Tibial artery (tissue), 4 donors: ENCODE measurements at regions of chr9 and their contacts with region 1.

Region 1: DNA sequence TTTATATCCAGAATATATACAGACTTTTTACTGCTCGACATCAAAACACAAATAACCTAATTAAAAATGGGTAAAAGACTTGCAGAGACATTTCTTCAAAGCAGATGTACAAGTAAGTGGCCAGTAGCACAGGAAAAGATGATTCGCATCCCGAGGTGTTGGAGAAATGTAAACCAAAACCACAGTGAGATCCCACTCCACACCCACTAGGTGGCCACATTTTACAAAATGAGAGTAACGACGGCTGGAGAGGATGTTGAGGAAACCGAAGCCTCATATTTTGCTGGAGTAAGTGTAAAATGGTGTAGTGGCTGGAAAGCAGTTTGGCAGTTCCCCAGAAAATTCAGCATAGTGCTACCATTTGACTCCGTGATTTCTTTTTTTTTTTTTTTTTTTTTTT is 21.2 kb upstream of the GBGT1 start:
- DNase-seq: no peak
- H3K4me3 ChIP-seq: no peak overlapping the region
- H3K27ac ChIP-seq: no peak overlapping the region
- H3K4me1 ChIP-seq: peaks cover 0 to 3% (median 0%) of the 10 kb centered on the region in 4 donors
- H3K27me3 ChIP-seq: peaks cover 0 to 23% of the 10 kb centered on the region in 2 donors
- CTCF ChIP-seq: peak; percentile 45 to 53

Region 2: DNA sequence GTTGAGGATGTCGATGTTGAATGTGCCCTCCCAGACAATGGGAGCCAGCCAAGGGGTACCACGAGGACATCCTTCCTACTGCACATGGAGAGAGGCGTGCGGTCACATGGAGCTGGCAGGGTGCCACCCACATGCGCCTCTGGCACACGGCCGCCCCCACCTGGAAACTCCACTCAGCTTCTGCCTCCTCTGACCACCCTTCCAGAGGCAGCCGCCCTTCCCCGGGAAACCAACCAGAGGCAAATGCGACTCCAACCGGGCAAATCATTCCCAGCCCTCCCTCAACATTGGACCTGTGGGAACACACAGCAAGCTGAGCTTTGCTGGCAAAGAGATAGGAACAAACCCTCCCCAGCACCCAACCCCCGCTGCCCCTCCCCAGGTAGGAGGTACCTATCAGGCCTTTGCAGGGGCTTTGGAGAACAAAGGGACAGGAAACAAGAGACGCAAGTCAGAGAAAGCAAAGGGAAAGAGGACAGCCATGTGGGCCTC is 72.5 kb after region 1 on chr9:
- intact Hi-C with region 1: no loop called
- DNase-seq: no peak
- H3K4me3 ChIP-seq: no peak overlapping the region
- H3K27ac ChIP-seq: no peak overlapping the region
- H3K4me1 ChIP-seq: no peaks in the 10 kb centered on the region
- H3K27me3 ChIP-seq: peaks cover 0 to 12% of the 10 kb centered on the region in 2 donors
- CTCF ChIP-seq: no peak

Region 3: DNA sequence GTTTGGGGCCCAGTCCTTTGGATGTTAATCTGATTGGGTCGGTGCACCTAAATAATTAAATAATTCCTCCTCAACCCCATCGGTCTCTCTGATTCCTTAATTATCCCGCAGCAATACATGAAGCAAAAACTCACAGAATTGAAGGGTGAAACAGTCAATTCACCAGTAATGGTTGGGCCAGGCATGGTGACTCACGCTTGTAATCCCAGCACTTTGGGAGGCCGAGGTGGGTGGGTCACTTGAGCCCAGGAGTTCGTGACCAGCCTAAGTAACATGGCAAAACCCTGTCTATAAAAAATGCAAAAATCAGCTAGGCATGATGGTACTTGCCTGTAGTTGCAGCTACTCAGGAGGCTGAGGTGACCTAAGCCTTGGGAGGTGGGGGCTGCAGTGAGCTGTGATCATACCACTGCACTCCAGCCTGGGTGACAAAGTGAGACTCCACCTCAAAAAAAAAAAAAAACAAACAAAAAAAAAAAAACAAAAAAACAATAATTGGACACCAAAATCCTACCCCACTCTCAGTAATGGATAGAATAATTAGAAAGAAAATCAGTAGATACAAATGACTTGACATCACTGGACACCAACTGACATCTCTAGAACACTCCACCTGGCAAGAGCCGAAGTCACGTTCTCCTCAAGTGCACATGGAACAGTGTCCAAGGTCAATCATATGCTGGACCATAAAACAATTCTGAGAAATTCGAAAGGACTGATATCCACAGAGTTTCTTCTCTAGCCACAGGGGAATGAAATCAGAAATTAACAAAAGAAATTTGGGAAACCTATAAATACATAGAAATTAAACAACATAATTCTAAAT is 84.8 kb after region 1 on chr9:
- intact Hi-C with region 1: no loop called
- DNase-seq: no peak
- H3K4me3 ChIP-seq: no peak overlapping the region
- H3K27ac ChIP-seq: no peak overlapping the region
- H3K4me1 ChIP-seq: peaks cover 0 to 1% (median 0%) of the 10 kb centered on the region in 4 donors
- H3K27me3 ChIP-seq: peaks cover 0 to 19% of the 10 kb centered on the region in 2 donors
- CTCF ChIP-seq: no peak

Region 4: GRCh38 chr9:133320421-133320881 is 135.5 kb after region 1 on chr9:
- intact Hi-C with region 1: loop called (anchors 10 kb)
- DNase-seq: no peak
- H3K4me3 ChIP-seq: no peak overlapping the region
- H3K27ac ChIP-seq: no peak overlapping the region
- H3K4me1 ChIP-seq: no peaks in the 10 kb centered on the region
- H3K27me3 ChIP-seq: no peaks in the 10 kb centered on the region
- CTCF ChIP-seq: no peak

Region 5: GRCh38 chr9:133490865-133491655 is 306.1 kb after region 1 on chr9:
- intact Hi-C with region 1: loop called (anchors 2 kb)
- DNase-seq: no peak
- H3K4me3 ChIP-seq: no peak overlapping the region
- H3K27ac ChIP-seq: peak overlapping the region in 1 of 2 donors; percentile 65
- H3K4me1 ChIP-seq: peaks cover 7 to 28% (median 19%) of the 10 kb centered on the region in 4 donors
- H3K27me3 ChIP-seq: peaks cover 0 to 15% of the 10 kb centered on the region in 2 donors
- CTCF ChIP-seq: no peak